Common myeloid progenitor, CD34-positive (primary cell): ENCODE measurements at regions of chr11 and their contacts with region 1.

Region 1: DNA sequence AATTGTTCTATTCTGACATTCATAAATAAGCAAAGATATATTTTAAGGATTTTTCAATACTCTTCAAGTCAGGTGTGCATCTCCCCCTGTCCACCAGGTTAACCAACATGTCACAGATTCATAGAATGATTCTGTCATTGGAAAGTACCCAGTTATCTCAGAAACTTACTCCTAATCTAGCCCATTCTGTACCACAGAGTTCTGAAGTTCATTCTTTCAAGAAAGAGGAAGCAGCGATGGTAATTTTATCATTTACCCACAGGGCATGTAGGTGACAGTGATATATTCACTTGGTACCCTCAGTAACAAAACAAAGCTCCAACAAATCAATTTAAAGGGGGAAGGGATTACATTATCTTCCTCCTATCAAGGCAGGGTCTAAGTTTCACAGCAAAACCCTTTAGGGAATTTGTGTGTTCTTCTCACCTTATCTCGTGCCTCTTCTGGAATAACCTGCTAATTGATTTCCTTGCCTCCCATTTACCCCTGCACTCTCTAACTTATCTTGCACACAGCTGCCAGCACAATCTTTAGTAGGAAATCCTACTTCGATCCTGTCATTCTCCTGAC is 19.0 kb upstream of the MPPED2 start:
- DNase-seq: peak; percentile 67 to 97 (median 93)
- H3K4me3 ChIP-seq: peak overlapping the region in 1 of 7 experiments; percentile 1
- H3K27ac ChIP-seq: peak overlapping the region; percentile 29 to 65
- H3K4me1 ChIP-seq: peaks cover 0 to 13% (median 3%) of the 10 kb centered on the region in 4 experiments
- H3K27me3 ChIP-seq: no peaks in the 10 kb centered on the region

Region 2: GRCh38 chr11:30586251-30587144 is 18.6 kb before region 1 on chr11 and contains the start of gene MPPED2:
- CTCF ChIA-PET with region 1: interaction called, 13 read pairs
- POLR2A ChIA-PET with region 1: no interaction called
- DNase-seq: peak; percentile 70 to 88 (median 82)
- H3K4me3 ChIP-seq: peak within 1 kb of the TSS; percentile 60 to 97 (median 84)
- H3K27ac ChIP-seq: peak within 1 kb of the TSS in 1 of 2 experiments; percentile 5
- H3K4me1 ChIP-seq: peaks cover 0 to 26% (median 19%) of the 10 kb centered on the region in 4 experiments
- H3K27me3 ChIP-seq: peaks cover 0 to 5% (median 3%) of the 10 kb centered on the region in 5 experiments